Motor neuron (in vitro differentiated cells): ENCODE measurements at regions of chr2 and their contacts with region 1.

Region 1: GRCh38 chr2:30447149-30448045 is at the start of gene LCLAT1:
- ATAC-seq: peak; percentile 93 to 99 (median 97)
- H3K4me3 ChIP-seq: peak within 1 kb of the TSS; percentile 83 to 98 (median 96)
- H3K27ac ChIP-seq: peak within 1 kb of the TSS; percentile 61 to 63
- H3K4me1 ChIP-seq: peaks cover 6 to 13% of the 10 kb centered on the region in 2 donors
- total RNA-seq, gene LCLAT1: 9.8 to 39.2 (median 12.9) TPM

Region 2: DNA sequence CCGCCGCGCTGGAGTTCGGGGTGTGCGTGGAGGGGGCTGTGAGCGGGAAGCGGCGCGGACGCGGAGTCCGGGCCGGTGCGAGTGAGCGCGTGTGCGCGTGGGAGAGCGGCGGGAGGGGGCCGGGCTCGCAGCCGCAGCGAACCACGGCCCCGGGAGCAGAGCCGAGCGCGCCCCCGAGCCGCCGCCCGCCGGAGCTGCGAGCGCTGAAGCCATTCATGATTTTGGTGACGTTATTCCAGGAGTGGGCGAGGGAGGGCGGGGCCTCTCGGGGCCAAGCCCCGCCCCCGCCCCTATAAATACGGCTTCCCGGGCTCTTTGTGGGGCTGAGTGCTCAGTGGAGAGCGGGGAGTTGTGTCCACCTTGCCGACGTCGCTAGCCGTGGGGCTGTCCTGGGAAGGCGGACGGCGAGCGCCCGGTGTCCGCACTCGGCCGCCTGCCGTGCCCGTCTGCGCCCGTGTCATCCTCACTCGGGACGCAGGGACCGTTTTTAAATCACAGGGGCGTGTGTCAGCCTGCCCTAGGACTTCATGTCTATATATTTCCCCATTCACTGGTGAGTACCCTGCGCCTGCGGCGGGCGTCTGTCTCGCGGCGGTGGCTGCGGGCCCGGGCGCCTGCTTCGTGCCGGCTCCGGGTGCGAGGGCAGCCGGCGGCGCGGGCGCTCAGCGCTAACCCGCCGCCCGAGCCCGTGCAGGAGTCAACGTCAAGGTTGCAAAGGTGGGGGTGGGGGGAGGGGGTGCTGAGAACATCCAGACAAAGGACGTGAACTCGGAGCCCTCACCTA is 216.0 kb before region 1 on chr2 and contains the start of gene LBH:
- in situ Hi-C with region 1: loop called in 2 of 9 experiments (anchors 25 kb)
- ATAC-seq: peak; percentile 62 to 83 (median 77)
- H3K4me3 ChIP-seq: peak within 1 kb of the TSS; percentile 55 to 90 (median 85)
- H3K27ac ChIP-seq: peak within 1 kb of the TSS; percentile 82 to 96
- H3K4me1 ChIP-seq: peaks cover 18% of the 10 kb centered on the region in 2 donors
- total RNA-seq, gene LBH: 3.0 to 88.7 (median 52.3) TPM

Region 3: DNA sequence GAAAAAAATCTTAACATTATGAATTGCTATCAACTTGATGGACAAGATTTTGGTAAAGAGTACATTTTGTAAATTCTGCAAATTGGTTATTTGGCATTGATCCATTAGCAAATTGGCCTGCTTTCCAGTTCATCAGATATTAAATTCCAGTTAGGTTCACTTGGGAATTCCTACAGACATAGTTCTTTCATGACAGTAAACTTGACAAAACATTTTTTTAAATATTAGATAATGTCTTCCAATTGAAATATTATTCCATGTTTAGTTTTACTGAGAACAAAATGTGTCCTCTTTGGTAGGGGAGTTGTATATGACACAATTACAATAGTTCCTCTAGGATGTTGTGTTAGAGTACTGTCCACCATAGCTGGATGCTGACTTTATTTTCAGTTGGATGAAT is 141.6 kb after region 1 on chr2:
- in situ Hi-C with region 1: no loop called
- ATAC-seq: no peak
- H3K4me3 ChIP-seq: no peak overlapping the region
- H3K27ac ChIP-seq: no peak overlapping the region
- H3K4me1 ChIP-seq: no peaks in the 10 kb centered on the region